ENCODE measurements at regions of chr3 and their contacts with region 1.

Region 1: DNA sequence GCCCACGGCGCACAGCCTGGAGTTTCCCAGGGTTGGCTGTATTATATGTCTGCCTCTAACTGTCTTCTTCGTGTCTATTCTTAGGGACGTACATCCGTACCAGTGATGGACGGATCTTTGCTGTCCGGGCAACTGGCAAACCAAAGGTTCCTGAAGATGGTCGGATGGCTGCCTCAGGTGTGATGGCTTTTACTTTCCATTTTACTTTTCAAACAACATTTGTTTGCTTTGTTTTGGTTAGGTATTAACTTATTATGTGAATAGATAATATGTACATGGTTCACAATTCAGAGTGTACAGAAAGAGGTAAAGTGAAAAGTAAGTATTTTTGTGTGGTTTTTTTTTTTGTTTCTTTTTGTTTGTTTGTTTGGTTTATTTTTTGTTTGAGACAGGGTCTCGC is 11.1 kb upstream of the TEX264 start:
- DNase-seq: no peak
- H3K4me3 ChIP-seq: no peak overlapping the region
- H3K4me3 Mint-ChIP-seq: no peak overlapping the region
- H3K27ac ChIP-seq: no peak overlapping the region
- H3K27ac Mint-ChIP-seq: no peak overlapping the region
- H3K4me1 ChIP-seq: no peaks in the 10 kb centered on the region
- H3K4me1 Mint-ChIP-seq: no peaks in the 10 kb centered on the region
- H3K27me3 ChIP-seq: no peaks in the 10 kb centered on the region
- H3K27me3 Mint-ChIP-seq: no peaks in the 10 kb centered on the region

Region 2: GRCh38 chr3:51519848-51520247 is 140.1 kb before region 1 on chr3:
- CTCF ChIA-PET with region 1: no interaction called
- POLR2A ChIA-PET with region 1: no interaction called
- DNase-seq: no peak
- H3K4me3 ChIP-seq: no peak overlapping the region
- H3K4me3 Mint-ChIP-seq: no peak overlapping the region
- H3K27ac ChIP-seq: no peak overlapping the region
- H3K27ac Mint-ChIP-seq: no peak overlapping the region
- H3K4me1 ChIP-seq: no peaks in the 10 kb centered on the region
- H3K4me1 Mint-ChIP-seq: peaks cover 0 to 8% (median 3%) of the 10 kb centered on the region in 3 donors
- H3K27me3 ChIP-seq: no peaks in the 10 kb centered on the region
- H3K27me3 Mint-ChIP-seq: peaks cover 2 to 3% of the 10 kb centered on the region in 2 donors

Region 3: DNA sequence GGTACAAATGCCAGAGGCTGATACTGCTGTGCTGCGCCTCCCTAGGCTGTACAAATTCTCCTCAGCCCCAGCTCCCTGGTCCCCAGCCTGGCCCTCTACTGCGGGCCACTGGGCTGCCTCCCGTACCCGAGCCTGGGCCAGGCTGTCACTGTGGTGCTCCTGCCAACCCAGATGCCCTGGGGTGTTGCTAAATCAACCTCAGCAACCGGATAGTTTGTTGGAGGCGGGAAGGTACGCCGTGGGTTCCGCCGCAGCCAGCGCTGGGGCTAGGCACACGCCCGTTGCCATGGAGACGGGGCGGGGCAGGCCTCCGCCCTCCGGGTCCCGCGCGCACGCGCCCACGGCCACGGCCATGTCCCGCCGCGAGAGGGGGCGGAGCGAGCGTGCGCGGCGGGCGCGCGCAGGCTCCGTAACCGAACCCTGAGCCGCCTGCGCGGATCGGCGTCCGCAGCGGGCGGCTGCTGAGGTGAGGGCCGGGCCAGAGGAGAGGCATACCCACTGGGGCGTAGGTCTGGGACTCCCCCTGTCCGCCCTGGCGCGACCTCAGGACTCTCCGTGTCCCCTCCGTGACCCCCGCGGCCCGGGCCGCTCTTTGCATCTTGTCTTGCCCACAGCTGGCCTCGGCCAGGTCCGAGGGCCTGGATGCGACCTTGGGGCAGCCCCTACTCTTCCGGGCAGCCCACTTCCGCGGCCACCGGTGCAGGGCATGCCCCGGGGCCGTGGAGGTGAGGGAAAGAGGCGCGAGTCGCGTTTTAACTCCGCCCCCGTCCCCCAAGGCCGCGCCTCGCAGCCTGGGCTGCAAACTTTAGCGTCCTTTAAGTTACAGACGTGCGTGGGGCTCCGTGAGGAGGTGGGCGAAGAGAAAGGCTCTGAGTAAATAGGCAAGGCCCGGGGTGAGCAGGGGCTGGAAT is 11.1 kb after region 1 on chr3 and contains the start of gene TEX264:
- CTCF ChIA-PET with region 1: interaction called, 17 read pairs
- POLR2A ChIA-PET with region 1: no interaction called
- DNase-seq: peak; percentile 94 to 97 (median 95)
- H3K4me3 ChIP-seq: peak within 1 kb of the TSS; percentile 90
- H3K4me3 Mint-ChIP-seq: peak within 1 kb of the TSS; percentile 84 to 96 (median 91)
- H3K27ac ChIP-seq: peak within 1 kb of the TSS; percentile 96
- H3K27ac Mint-ChIP-seq: peak within 1 kb of the TSS; percentile 88 to 98 (median 92)
- H3K4me1 ChIP-seq: peaks cover 62% of the 10 kb centered on the region
- H3K4me1 Mint-ChIP-seq: peaks cover 62 to 72% (median 65%) of the 10 kb centered on the region in 3 donors
- H3K27me3 ChIP-seq: no peaks in the 10 kb centered on the region
- H3K27me3 Mint-ChIP-seq: peaks cover 0 to 2% of the 10 kb centered on the region in 2 donors
- total RNA-seq, gene TEX264: 48.2 to 52.3 TPM

Region 4: DNA sequence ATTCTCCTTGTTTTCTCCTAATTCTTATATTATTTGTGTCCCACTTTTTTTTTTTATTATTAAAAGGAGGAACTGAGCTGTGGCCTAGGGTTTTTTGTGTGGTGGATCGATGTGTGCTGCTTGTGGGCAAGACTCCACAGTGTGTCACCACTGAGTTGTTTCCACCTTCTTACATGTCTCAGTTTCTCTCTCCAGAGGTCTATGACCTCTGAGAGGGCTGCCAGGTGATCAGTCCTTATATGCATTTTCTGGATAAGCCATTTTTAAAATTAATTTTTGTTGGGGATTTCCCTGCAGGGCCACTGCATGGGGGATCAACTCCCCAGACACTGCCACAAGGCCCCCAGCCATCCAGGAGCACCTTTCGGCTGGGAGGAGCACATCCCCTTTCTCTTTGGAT is 91.3 kb after region 1 on chr3:
- CTCF ChIA-PET with region 1: no interaction called
- POLR2A ChIA-PET with region 1: no interaction called
- DNase-seq: no peak
- H3K4me3 ChIP-seq: no peak overlapping the region
- H3K4me3 Mint-ChIP-seq: no peak overlapping the region
- H3K27ac ChIP-seq: no peak overlapping the region
- H3K27ac Mint-ChIP-seq: peak overlapping the region in 1 of 8 donors; percentile 5
- H3K4me1 ChIP-seq: no peaks in the 10 kb centered on the region
- H3K4me1 Mint-ChIP-seq: peaks cover 4 to 13% (median 10%) of the 10 kb centered on the region in 3 donors
- H3K27me3 ChIP-seq: no peaks in the 10 kb centered on the region
- H3K27me3 Mint-ChIP-seq: peaks cover 0 to 10% of the 10 kb centered on the region in 2 donors